OCI-LY7 (cell line): ENCODE measurements at regions of chr12 and their contacts with region 1.

Region 1: DNA sequence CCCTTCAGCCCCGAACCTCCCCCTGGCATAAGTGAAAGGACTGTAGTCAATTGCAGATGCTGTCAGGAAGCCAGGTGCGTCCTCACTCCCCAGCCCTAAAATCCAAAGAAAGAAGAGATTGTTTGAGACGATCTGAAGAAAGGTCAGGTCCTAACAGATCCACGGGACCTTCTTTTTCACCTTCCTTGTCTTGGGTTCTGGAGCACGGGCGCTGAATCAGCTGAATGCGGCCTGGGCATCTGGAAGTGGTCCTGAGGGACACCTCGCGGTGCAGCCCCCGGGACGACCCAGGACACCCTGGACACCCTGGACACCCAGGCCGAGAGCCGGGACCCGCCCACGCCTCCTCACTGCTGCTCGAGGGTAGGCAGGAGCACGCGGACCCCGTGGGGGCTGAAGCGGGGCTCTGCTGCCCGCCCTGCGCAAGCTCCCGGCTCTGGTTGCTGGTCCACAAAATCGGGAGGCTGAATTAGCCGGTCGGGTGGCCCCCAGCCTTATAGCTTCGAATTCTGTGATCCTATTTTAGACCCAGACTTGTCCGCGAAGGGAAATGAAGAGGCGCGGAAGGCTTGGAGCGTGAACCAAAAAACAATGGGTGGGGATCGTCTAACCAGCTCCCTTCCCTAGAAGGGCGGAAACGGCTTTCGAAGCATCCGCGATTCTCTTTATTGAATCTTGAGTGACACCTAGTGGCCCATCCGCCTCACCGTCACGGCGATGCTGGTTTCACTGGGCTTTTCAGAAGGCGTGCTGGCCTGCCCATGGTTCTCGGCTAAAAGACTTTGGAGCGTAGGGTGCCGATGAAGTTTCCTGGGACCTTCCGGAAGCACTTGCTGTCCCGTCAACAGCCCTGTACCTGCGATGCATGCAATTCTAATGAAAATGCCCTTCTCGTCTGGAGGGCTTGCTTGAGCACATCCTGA is 46.4 kb upstream of the PLXNC1 start:
- DNase-seq: peak; percentile 89
- H3K4me3 ChIP-seq: no peak overlapping the region
- H3K27ac ChIP-seq: no peak overlapping the region
- H3K4me1 ChIP-seq: peaks cover 3% of the 10 kb centered on the region
- CTCF ChIP-seq: peak; percentile 87

Region 2: DNA sequence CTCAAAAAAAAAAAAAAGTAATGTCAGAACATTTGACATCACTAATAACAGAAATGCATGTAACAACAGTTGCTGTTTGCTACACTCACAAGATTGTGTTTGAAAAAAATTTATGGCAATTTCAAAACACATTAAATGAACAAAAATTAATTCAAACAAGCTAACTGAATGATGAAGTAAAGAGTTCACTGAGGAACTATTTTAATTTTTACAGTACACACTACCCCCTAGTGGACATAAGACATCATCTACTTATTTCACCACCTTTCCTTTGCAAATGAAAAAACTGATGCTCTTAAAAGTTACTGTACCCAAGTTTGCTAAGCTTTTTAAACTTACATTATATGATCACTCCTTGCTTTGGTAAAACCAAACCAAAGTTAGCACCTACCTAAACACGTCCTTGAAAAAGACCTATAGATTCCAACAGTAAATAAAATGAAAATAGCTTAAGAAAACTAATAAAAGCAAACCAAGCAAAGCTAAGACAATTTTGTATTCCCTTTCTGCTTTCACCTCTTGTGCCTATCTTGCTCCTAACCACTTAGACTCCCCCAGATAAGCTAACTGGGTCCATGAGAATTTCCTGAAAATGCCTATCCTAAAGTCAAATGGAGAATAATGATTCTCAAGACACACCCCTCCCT is 682.5 kb before region 1 on chr12:
- CTCF ChIA-PET with region 1: no interaction called
- POLR2A ChIA-PET with region 1: interaction called, 3 read pairs
- intact Hi-C with region 1: loop called (anchors 10 kb)
- DNase-seq: peak; percentile 70
- H3K4me3 ChIP-seq: no peak overlapping the region
- H3K27ac ChIP-seq: no peak overlapping the region
- H3K4me1 ChIP-seq: peaks cover 85% of the 10 kb centered on the region
- CTCF ChIP-seq: peak; percentile 85

Region 3: GRCh38 chr12:93569656-93570551 is 532.1 kb before region 1 on chr12:
- CTCF ChIA-PET with region 1: interaction called, 9 read pairs
- POLR2A ChIA-PET with region 1: no interaction called
- intact Hi-C with region 1: loop called (anchors 1 kb)
- DNase-seq: peak; percentile 76
- H3K4me3 ChIP-seq: peak overlapping the region; percentile 63
- H3K27ac ChIP-seq: no peak overlapping the region
- H3K4me1 ChIP-seq: peaks cover 19% of the 10 kb centered on the region
- CTCF ChIP-seq: peak; percentile 83

Region 4: DNA sequence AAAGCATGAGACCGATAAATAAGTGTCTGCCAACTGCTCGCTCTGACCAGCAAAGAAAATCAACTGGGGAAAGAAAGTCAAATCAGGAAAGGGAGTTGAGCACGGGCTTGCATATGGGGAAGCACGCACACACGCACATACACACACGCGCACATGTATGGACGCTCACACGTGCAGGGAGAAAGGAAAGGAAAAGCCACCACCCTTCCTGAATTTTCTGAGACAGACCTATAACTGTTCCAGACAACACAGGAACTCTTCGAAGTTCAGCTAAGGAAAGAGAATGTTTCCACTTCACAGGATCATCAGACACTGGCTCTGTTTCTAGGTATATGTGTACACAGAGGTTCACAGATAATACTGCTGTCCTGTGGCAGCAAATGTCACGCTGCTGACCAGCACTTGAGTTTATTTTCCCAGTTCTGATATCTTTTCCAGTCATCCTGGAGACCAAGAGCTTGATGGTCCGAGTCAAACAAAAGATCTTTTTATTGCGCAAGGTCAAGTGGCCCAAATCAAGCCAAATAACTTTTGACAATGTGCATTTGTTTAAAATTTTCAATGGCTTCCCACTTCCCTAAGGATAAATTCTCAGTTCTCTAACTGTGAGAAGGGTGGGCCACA is 630.5 kb after region 1 on chr12:
- CTCF ChIA-PET with region 1: no interaction called
- POLR2A ChIA-PET with region 1: no interaction called
- intact Hi-C with region 1: no loop called
- DNase-seq: no peak
- H3K4me3 ChIP-seq: no peak overlapping the region
- H3K27ac ChIP-seq: no peak overlapping the region
- H3K4me1 ChIP-seq: peaks cover 14% of the 10 kb centered on the region
- CTCF ChIP-seq: no peak